Common myeloid progenitor, CD34-positive (primary cell): ENCODE measurements at regions of chr12 and their contacts with region 1.

Region 1: GRCh38 chr12:55738123-55739024 is 4.5 kb upstream of the GDF11 start:
- DNase-seq: peak; percentile 82 to 90 (median 90)
- H3K4me3 ChIP-seq: peak overlapping the region; percentile 39 to 97 (median 79)
- H3K27ac ChIP-seq: peak overlapping the region; percentile 61 to 82
- H3K4me1 ChIP-seq: peaks cover 6 to 34% (median 28%) of the 10 kb centered on the region in 4 experiments
- H3K27me3 ChIP-seq: no peaks in the 10 kb centered on the region

Region 2: GRCh38 chr12:55637467-55637866 is 100.9 kb before region 1 on chr12:
- CTCF ChIA-PET with region 1: no interaction called
- POLR2A ChIA-PET with region 1: no interaction called
- DNase-seq: no peak
- H3K4me3 ChIP-seq: no peak overlapping the region
- H3K27ac ChIP-seq: no peak overlapping the region
- H3K4me1 ChIP-seq: peaks cover 0 to 17% (median 7%) of the 10 kb centered on the region in 4 experiments
- H3K27me3 ChIP-seq: no peaks in the 10 kb centered on the region

Region 3: GRCh38 chr12:55760663-55761062 is 22.3 kb after region 1 on chr12:
- CTCF ChIA-PET with region 1: interaction called, 145 read pairs
- POLR2A ChIA-PET with region 1: no interaction called
- DNase-seq: no peak
- H3K4me3 ChIP-seq: no peak overlapping the region
- H3K27ac ChIP-seq: no peak overlapping the region
- H3K4me1 ChIP-seq: no peaks in the 10 kb centered on the region
- H3K27me3 ChIP-seq: no peaks in the 10 kb centered on the region

Region 4: GRCh38 chr12:55797068-55797467 is 58.7 kb after region 1 on chr12:
- CTCF ChIA-PET with region 1: interaction called, 76 read pairs
- POLR2A ChIA-PET with region 1: interaction called, 4 read pairs
- DNase-seq: peak; percentile 56 to 70 (median 64)
- H3K4me3 ChIP-seq: no peak overlapping the region
- H3K27ac ChIP-seq: no peak overlapping the region
- H3K4me1 ChIP-seq: no peaks in the 10 kb centered on the region
- H3K27me3 ChIP-seq: no peaks in the 10 kb centered on the region

Region 5: DNA sequence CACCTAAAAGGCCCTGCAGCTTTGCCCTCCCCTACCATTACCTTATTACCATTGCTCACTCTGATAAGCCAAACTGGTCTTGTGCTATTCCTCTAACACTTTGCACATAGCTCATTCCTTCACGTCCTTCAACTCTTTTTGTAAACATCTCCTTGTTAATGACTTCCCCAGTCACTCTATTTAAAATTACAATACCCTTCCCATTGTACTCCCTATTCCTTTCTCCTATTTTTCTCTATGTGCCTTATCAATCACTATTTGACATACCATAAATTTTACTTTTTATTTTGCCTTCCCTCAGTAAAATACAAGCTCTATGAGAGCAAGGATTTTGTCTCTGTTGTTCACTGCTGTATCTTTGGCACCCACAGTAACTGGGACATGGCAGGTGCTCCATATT is 73.7 kb after region 1 on chr12:
- CTCF ChIA-PET with region 1: interaction called, 10 read pairs
- POLR2A ChIA-PET with region 1: no interaction called
- DNase-seq: no peak
- H3K4me3 ChIP-seq: no peak overlapping the region
- H3K27ac ChIP-seq: no peak overlapping the region
- H3K4me1 ChIP-seq: peaks cover 7 to 18% (median 9%) of the 10 kb centered on the region in 4 experiments
- H3K27me3 ChIP-seq: no peaks in the 10 kb centered on the region

Region 6: DNA sequence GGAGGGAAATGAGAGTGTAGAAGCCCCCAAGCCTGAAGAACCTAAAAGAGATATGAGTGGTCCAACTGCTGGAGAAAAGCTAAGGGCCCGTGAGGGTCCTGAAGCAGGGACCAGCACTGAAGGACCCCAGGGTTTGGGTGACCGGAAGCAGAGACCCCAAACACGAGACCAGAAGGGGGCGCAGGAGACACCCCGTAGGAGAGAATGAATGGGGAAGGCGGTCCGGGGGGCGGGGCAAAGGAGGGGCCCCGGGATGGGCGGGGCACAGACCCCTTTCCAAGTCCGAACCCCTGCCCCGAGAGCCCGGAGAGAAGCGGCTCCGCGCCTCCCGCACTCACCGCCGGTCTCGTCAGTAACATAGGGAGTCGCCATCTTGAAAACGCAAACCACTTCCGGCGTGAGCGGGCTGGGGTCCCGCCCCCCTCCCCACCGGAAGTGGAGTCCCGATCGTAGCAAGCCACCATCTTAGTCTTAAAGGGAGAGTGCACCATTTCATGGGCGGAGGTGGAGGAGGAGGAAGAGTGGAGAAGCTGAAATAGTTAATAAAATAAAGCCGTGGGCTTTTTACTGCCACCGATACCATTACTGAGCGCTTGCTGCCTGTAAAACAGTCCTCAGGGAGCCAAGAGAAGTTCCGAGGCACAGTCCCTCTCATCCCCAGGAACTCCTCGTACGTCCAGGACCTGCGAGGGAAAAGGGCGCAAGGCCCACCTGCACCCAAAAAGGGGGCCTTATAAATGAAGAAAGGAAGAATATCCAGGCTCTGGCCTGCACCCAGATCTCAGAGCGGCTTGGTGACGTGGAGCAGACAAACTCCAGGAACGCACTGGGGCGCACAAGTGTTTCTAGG is 188.6 kb after region 1 on chr12:
- CTCF ChIA-PET with region 1: interaction called, 10 read pairs
- POLR2A ChIA-PET with region 1: no interaction called
- DNase-seq: peak; percentile 95 to 97 (median 96)
- H3K4me3 ChIP-seq: peak overlapping the region; percentile 83 to 100 (median 99)
- H3K27ac ChIP-seq: peak overlapping the region; percentile 90 to 97
- H3K4me1 ChIP-seq: peaks cover 23 to 61% (median 47%) of the 10 kb centered on the region in 4 experiments
- H3K27me3 ChIP-seq: no peaks in the 10 kb centered on the region